ENCODE measurements at regions of chr18 and their contacts with region 1.

Region 1: GRCh38 chr18:60485201-60485600 is 112.6 kb upstream of the MC4R start:
- DNase-seq: no peak
- H3K4me3 ChIP-seq: no peak overlapping the region
- H3K27ac ChIP-seq: no peak overlapping the region
- H3K4me1 ChIP-seq: no peaks in the 10 kb centered on the region
- H3K27me3 ChIP-seq: no peaks in the 10 kb centered on the region
- CTCF ChIP-seq: no peak
- POLR2A ChIP-seq: no peak

Region 2: GRCh38 chr18:60506682-60507081 is 21.5 kb after region 1 on chr18:
- intact Hi-C with region 1: loop called (anchors 2 kb)
- DNase-seq: no peak
- H3K4me3 ChIP-seq: no peak overlapping the region
- H3K27ac ChIP-seq: no peak overlapping the region
- H3K4me1 ChIP-seq: no peaks in the 10 kb centered on the region
- H3K27me3 ChIP-seq: no peaks in the 10 kb centered on the region
- CTCF ChIP-seq: no peak
- POLR2A ChIP-seq: no peak

Measured in breast epithelium (tissue), 4 donors.